ENCODE measurements at regions of chr4 and their contacts with region 1.

Region 1: GRCh38 chr4:98995183-98996055 is at the start of gene METAP1:
- DNase-seq: peak; percentile 79
- ATAC-seq: peak; percentile 90
- H3K4me3 ChIP-seq: peak within 1 kb of the TSS; percentile 94
- H3K27ac ChIP-seq: peak within 1 kb of the TSS; percentile 74
- H3K4me1 ChIP-seq: no peaks in the 10 kb centered on the region
- H3K27me3 ChIP-seq: no peaks in the 10 kb centered on the region
- CTCF ChIP-seq: peak; percentile 67 to 85 (median 72)
- EP300 ChIP-seq: no peak
- POLR2A ChIP-seq: peak; percentile 96
- RAD21 ChIP-seq: peak; percentile 80
- polyA plus RNA-seq, gene METAP1: 22.7 to 32.4 TPM

Region 2: DNA sequence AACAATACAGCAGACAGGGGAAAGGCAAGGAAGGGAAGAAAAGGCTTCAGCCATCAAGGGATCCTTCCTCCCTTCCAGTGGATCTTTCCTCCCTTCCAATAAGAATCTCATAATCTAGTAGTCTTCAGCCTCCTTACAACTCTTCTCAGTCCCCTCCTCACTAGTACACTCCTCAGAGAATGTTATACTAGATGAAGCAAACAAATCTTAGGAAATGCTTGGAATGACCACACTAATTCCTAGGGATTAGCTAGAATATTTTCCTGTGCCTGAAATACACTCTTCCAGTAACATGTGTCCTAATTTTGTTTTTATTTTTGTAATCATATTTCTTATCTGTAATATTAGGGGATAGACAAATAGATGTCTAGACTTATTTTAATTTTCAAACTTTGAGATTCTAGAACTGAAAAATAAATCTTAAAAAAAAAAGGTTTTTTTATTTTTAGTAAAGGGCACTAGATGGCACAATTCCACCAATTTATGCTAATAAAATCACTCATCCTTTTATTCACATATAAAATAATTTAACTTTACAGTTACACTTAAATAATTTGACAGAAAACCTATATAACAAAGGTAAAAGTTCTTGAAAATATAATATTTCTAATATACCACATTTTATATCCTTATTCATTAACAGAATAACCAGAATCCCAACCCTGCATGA is 845.2 kb before region 1 on chr4:
- CTCF ChIA-PET with region 1: interaction called, 11 read pairs
- POLR2A ChIA-PET with region 1: no interaction called
- RAD21 ChIA-PET with region 1: no interaction called
- SMC1A ChIA-PET with region 1: interaction called, 3 read pairs
- in situ Hi-C with region 1: no loop called
- intact Hi-C with region 1: no loop called
- DNase-seq: no peak
- ATAC-seq: no peak
- H3K4me3 ChIP-seq: no peak overlapping the region
- H3K27ac ChIP-seq: no peak overlapping the region
- H3K4me1 ChIP-seq: no peaks in the 10 kb centered on the region
- H3K27me3 ChIP-seq: no peaks in the 10 kb centered on the region; a peak in 1 of 4 replicates
- CTCF ChIP-seq: no peak; a peak in 1 of 6 replicates
- EP300 ChIP-seq: no peak
- POLR2A ChIP-seq: no peak
- RAD21 ChIP-seq: no peak

Region 3: DNA sequence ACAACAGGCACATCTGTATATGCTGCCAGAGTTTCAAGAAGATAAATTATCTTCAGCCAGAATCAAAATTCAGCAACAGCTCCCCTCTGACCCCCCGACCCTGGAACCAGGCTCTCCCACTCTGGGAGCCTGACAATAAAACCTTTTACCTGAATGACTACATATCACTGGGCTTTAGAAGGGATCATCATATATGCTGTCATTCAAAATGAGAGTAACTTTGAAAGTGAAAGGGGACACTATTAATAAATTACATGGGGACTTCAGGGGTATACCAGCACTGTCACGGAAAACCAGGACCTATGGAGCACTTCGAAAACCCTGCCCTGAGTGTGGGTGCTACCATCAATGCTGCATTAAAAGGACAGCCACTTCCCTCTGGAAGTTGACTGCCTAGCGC is 363.2 kb before region 1 on chr4:
- CTCF ChIA-PET with region 1: no interaction called
- POLR2A ChIA-PET with region 1: no interaction called
- RAD21 ChIA-PET with region 1: no interaction called
- SMC1A ChIA-PET with region 1: no interaction called
- in situ Hi-C with region 1: no loop called
- intact Hi-C with region 1: no loop called
- DNase-seq: no peak
- ATAC-seq: peak; percentile 67
- H3K4me3 ChIP-seq: no peak overlapping the region
- H3K27ac ChIP-seq: no peak overlapping the region
- H3K4me1 ChIP-seq: no peaks in the 10 kb centered on the region
- H3K27me3 ChIP-seq: no peaks in the 10 kb centered on the region
- CTCF ChIP-seq: no peak
- EP300 ChIP-seq: no peak
- POLR2A ChIP-seq: no peak
- RAD21 ChIP-seq: no peak

Region 4: DNA sequence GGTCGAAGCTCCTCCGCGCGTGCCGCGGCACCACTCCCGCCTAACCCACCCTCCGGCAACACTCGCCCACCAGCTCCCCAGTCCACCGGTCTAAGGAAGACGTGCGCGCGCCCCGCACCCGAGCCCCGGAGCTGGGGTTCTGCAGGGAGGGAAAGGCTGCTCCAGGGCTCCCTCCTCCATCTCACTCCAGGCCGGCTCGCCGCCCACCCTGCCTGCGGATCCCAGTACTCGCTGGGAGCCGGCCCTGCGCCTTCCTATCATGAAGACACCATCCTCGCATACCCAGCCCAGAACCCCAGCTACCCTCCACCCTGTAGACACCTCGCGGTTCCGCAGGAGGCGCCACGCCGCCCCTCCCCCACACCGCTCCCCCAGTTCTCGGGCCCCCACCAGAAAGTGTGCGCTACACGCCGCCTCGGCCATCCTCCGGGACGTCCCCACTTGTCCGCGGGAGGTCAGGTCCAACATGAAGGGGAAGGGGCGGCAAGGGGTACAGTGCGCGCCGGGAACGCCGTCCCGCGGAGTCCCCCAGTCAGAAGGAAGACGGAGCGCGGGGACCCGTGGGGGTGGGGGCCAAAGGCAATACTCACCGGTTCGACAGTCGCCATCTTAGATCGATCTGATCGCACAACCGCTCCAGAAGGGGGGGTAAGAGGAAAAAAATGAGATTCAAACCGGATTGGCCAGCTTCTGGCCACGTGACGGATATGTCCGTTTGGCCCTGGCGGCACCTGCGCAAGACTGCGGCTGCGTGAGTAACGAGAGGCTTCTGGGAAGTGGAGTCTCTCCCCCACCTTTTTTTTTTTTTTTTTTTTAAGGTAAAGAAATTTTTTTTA is 66.7 kb before region 1 on chr4 and contains the start of gene EIF4E:
- CTCF ChIA-PET with region 1: interaction called, 12 read pairs
- POLR2A ChIA-PET with region 1: interaction called, 8 read pairs
- RAD21 ChIA-PET with region 1: interaction called, 6 read pairs
- SMC1A ChIA-PET with region 1: interaction called, 5 read pairs
- in situ Hi-C with region 1: no loop called
- intact Hi-C with region 1: loop called (anchors 1 kb)
- DNase-seq: peak; percentile 96
- ATAC-seq: peak; percentile 82
- H3K4me3 ChIP-seq: peak within 1 kb of the TSS; percentile 95
- H3K27ac ChIP-seq: peak within 1 kb of the TSS; percentile 96
- H3K4me1 ChIP-seq: peaks cover 8% of the 10 kb centered on the region
- H3K27me3 ChIP-seq: no peaks in the 10 kb centered on the region
- CTCF ChIP-seq: peak; percentile 20 to 38 (median 27); a peak in 5 of 6 replicates
- EP300 ChIP-seq: 0 out of 4 replicates have a peak, but pooled peaks of 1 of the 2 experiments have one; percentile 10
- POLR2A ChIP-seq: peak; percentile 91
- RAD21 ChIP-seq: no peak
- polyA plus RNA-seq, gene EIF4E: 167 to 372 TPM

Region 5: DNA sequence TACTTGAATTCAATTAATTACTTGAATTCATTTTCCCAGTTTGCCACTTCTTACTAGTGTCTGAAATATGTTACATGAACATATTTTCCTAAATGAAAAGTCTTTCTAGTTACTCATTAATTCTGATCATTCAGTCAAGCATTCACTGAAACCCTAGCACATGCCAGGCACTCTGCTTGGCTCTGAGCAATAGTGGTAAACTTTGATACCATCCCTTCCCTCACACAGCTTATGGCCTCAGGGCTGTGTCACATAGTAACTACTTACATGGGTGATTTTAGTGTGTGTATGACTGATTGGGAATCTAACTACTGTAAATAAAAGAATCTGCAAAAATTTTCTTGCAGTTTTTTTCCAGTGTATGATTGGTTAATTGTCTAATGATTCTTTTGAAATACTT is 32.8 kb after region 1 on chr4:
- CTCF ChIA-PET with region 1: interaction called, 7 read pairs
- POLR2A ChIA-PET with region 1: no interaction called
- RAD21 ChIA-PET with region 1: interaction called, 19 read pairs
- SMC1A ChIA-PET with region 1: interaction called, 6 read pairs
- in situ Hi-C with region 1: no loop called
- intact Hi-C with region 1: no loop called
- DNase-seq: no peak
- ATAC-seq: peak; percentile 85
- H3K4me3 ChIP-seq: no peak overlapping the region
- H3K27ac ChIP-seq: no peak overlapping the region
- H3K4me1 ChIP-seq: peaks cover 4% of the 10 kb centered on the region; the same call in 1 of the 2 replicates
- H3K27me3 ChIP-seq: no peaks in the 10 kb centered on the region
- CTCF ChIP-seq: no peak
- EP300 ChIP-seq: no peak
- POLR2A ChIP-seq: no peak
- RAD21 ChIP-seq: no peak

Region 6: GRCh38 chr4:99088481-99089365 is 93.3 kb after region 1 on chr4 and contains the start of gene ADH5:
- CTCF ChIA-PET with region 1: interaction called, 7 read pairs
- POLR2A ChIA-PET with region 1: interaction called, 4 read pairs
- RAD21 ChIA-PET with region 1: interaction called, 22 read pairs
- SMC1A ChIA-PET with region 1: interaction called, 6 read pairs
- in situ Hi-C with region 1: no loop called
- intact Hi-C with region 1: no loop called
- DNase-seq: peak; percentile 51
- ATAC-seq: peak; percentile 95
- H3K4me3 ChIP-seq: peak within 1 kb of the TSS; percentile 90
- H3K27ac ChIP-seq: peak within 1 kb of the TSS; percentile 76
- H3K4me1 ChIP-seq: no peaks in the 10 kb centered on the region
- H3K27me3 ChIP-seq: no peaks in the 10 kb centered on the region
- CTCF ChIP-seq: no peak
- EP300 ChIP-seq: no peak
- POLR2A ChIP-seq: peak; percentile 96
- RAD21 ChIP-seq: no peak
- polyA plus RNA-seq, gene ADH5: 96.3 to 134 TPM

Region 7: DNA sequence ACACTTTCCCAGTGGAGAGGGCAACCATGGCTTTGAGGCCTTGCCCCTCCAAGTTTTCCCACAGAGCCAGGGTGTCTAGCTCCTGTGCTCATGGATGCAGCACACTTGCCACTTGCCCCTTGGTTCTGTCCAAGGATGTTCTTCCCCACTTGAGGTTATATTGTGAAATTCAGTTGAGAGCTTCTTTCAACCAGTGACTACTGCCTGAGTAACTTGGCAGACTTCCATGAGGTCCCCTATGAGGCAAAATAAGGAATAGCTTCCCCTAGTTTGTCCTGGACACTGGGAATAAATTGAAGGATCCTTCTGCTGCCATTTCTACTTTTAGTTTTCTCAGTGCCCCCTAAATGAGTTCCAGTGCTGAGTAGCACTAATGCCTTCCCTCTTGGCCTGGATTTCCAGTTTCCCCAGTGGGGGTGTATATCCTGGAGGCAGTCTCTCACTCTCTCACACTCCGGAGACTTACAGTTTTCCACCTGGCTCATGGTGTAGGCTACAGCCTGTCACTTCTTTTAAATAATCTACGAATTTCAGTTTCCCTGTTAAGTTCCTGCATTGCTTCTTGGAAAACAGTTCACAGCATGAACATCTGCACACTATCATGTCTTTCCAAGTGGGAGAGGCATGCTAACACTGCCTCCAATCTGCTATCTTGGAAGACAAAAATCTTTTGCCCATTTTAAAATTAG is 185.1 kb after region 1 on chr4:
- CTCF ChIA-PET with region 1: no interaction called
- POLR2A ChIA-PET with region 1: no interaction called
- RAD21 ChIA-PET with region 1: no interaction called
- SMC1A ChIA-PET with region 1: no interaction called
- in situ Hi-C with region 1: no loop called
- intact Hi-C with region 1: no loop called
- DNase-seq: no peak
- ATAC-seq: no peak
- H3K4me3 ChIP-seq: no peak overlapping the region
- H3K27ac ChIP-seq: no peak overlapping the region
- H3K4me1 ChIP-seq: no peaks in the 10 kb centered on the region
- H3K27me3 ChIP-seq: no peaks in the 10 kb centered on the region
- CTCF ChIP-seq: no peak
- EP300 ChIP-seq: no peak
- POLR2A ChIP-seq: no peak
- RAD21 ChIP-seq: no peak

Region 8: GRCh38 chr4:99821918-99822503 is 826.6 kb after region 1 on chr4:
- CTCF ChIA-PET with region 1: no interaction called
- POLR2A ChIA-PET with region 1: no interaction called
- RAD21 ChIA-PET with region 1: interaction called, 3 read pairs
- SMC1A ChIA-PET with region 1: no interaction called
- in situ Hi-C with region 1: no loop called
- intact Hi-C with region 1: loop called (anchors 10 kb)
- DNase-seq: peak; percentile 59
- ATAC-seq: peak; percentile 73
- H3K4me3 ChIP-seq: peak overlapping the region; percentile 59; the same call in 1 of the 2 replicates
- H3K27ac ChIP-seq: peak overlapping the region; percentile 70
- H3K4me1 ChIP-seq: peaks cover 17% of the 10 kb centered on the region; the same call in 1 of the 2 replicates
- H3K27me3 ChIP-seq: no peaks in the 10 kb centered on the region
- CTCF ChIP-seq: no peak
- EP300 ChIP-seq: no peak
- POLR2A ChIP-seq: no peak
- RAD21 ChIP-seq: no peak